Heart left ventricle (tissue), 16 donors: ENCODE measurements at regions of chr12 and their contacts with region 1.

Region 1: GRCh38 chr12:9064815-9065606 is 50.7 kb downstream of the A2M start:
- DNase-seq: peak; percentile 79 to 90 (median 83)
- ATAC-seq: peak; percentile 88 to 95 (median 94)
- H3K4me3 ChIP-seq: peak overlapping the region; percentile 62 to 97 (median 85)
- H3K27ac ChIP-seq: peak overlapping the region; percentile 89 to 99 (median 97)
- H3K4me1 ChIP-seq: peaks cover 0 to 17% (median 8%) of the 10 kb centered on the region in 12 donors
- H3K27me3 ChIP-seq: no peaks in the 10 kb centered on the region
- CTCF ChIP-seq: no peak
- POLR2A ChIP-seq: peak in 1 of 2 donors; percentile 86

Region 2: GRCh38 chr12:8887285-8887715 is 177.7 kb before region 1 on chr12:
- intact Hi-C with region 1: no loop called
- DNase-seq: no peak
- ATAC-seq: no peak
- H3K4me3 ChIP-seq: no peak overlapping the region
- H3K27ac ChIP-seq: no peak overlapping the region
- H3K4me1 ChIP-seq: peaks cover 0 to 5% (median 0%) of the 10 kb centered on the region in 12 donors
- H3K27me3 ChIP-seq: no peaks in the 10 kb centered on the region
- CTCF ChIP-seq: no peak
- POLR2A ChIP-seq: no peak

Region 3: DNA sequence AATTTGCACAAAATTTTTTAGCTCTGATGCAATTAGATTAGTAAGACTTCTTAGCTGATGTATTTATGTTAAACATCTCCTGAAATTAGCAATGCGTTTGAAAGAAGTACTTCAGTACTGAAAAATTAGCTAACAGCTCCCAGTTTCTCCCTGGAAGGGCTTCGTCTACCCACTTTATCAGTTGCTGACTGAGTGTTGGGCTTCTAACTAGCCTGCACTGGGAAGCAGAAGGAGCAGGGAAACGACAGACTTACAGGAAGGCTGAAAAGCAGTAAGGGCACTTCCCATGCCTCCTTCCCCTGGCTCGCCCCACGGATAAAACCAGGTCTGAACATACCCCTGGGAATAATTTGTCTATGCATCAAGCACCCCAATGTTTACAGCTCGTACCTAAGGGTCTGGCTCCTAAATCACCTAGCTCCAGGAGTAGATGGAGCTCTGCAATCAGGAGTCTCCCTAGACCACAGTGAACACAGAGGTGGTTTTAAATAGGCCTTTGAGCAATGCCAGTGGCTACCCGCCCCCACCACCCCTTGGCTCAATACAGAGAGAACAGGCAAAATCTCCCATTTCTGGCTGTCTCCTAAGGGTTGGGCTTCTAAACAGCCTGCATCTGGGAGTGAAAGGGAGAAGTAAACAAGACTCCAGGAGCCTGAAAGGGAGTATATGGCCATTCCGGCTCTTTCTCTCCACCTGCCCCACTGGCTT is 27.0 kb after region 1 on chr12:
- intact Hi-C with region 1: loop called in 1 of 10 experiments (anchors 2 kb)
- DNase-seq: no peak
- ATAC-seq: peak in 1 of 4 donors; percentile 26
- H3K4me3 ChIP-seq: no peak overlapping the region
- H3K27ac ChIP-seq: peak overlapping the region in 3 of 12 donors; percentile 22 to 73 (median 63)
- H3K4me1 ChIP-seq: peaks cover 0 to 27% (median 10%) of the 10 kb centered on the region in 12 donors
- H3K27me3 ChIP-seq: no peaks in the 10 kb centered on the region
- CTCF ChIP-seq: no peak
- POLR2A ChIP-seq: no peak

Region 4: DNA sequence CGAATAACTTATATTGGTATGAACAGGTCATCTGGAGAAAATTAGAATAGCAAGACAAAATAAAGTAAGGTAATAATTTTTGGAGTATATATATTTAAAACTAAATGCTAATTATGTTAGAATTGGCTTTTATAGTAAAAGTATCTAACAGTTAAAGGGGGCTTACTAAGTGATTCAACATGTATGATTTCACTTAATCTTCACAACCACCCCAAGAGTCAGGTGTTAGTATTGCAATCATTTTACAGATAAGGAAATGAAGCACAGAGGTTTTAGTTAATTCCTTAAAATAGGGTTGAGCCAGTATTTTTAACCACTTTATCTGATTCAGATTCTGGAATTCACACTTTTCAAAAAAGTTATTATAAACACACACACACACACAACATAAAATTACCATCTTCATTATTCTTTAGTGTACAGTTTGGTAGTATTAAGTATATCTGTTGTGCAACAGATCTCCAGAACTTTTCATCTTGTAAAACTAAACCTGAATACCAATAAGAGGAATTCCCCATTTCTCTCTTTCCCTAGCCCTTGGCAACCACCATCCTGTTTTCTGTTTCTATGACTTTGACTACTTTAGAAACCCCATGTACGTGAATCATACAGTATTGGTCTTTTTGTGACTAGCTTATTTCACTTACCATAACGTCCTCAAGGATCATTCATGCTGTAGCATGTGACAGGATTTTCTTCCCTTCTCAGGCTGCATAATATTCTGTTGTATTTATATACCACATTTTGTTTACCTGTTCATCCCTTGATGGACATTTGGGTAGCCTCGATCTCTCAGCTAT is 38.2 kb after region 1 on chr12:
- intact Hi-C with region 1: loop called in 4 of 10 experiments (anchors 5 kb)
- DNase-seq: no peak
- ATAC-seq: no peak
- H3K4me3 ChIP-seq: no peak overlapping the region
- H3K27ac ChIP-seq: no peak overlapping the region
- H3K4me1 ChIP-seq: peaks cover 0 to 16% (median 3%) of the 10 kb centered on the region in 12 donors
- H3K27me3 ChIP-seq: no peaks in the 10 kb centered on the region
- CTCF ChIP-seq: no peak
- POLR2A ChIP-seq: no peak

Region 5: GRCh38 chr12:9144730-9145106 is 79.7 kb after region 1 on chr12:
- intact Hi-C with region 1: no loop called
- DNase-seq: no peak
- ATAC-seq: no peak
- H3K4me3 ChIP-seq: no peak overlapping the region
- H3K27ac ChIP-seq: no peak overlapping the region
- H3K4me1 ChIP-seq: no peaks in the 10 kb centered on the region
- H3K27me3 ChIP-seq: no peaks in the 10 kb centered on the region
- CTCF ChIP-seq: no peak
- POLR2A ChIP-seq: no peak